OCI-LY7 (cell line): ENCODE measurements at regions of chr5 and their contacts with region 1.

Region 1: GRCh38 chr5:107294211-107294550 is 376.6 kb downstream of the EFNA5 start:
- DNase-seq: peak; percentile 65
- H3K4me3 ChIP-seq: peak overlapping the region; percentile 2
- H3K27ac ChIP-seq: peak overlapping the region; percentile 49
- H3K4me1 ChIP-seq: peaks cover 38% of the 10 kb centered on the region
- CTCF ChIP-seq: no peak

Region 2: DNA sequence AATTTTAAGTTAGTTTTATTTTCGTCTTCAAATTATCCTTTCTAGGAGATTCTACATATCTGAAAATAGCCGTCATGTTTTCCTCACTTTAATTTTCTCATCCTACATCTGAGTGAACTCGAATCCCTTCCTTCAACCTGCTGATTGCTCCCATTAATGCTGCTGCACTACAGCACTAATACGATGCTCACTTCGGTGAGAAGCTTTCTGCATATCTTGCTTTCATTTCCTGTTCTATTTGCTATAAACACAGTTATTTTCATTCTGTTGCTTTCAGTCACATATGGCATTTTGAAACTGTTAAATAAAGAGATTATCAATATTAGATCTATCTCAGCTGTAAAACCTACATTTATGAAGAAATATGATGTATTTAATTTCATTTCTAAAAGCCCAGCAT is 372.6 kb before region 1 on chr5:
- CTCF ChIA-PET with region 1: no interaction called
- POLR2A ChIA-PET with region 1: no interaction called
- intact Hi-C with region 1: no loop called
- DNase-seq: no peak
- H3K4me3 ChIP-seq: no peak overlapping the region
- H3K27ac ChIP-seq: no peak overlapping the region
- H3K4me1 ChIP-seq: no peaks in the 10 kb centered on the region
- CTCF ChIP-seq: no peak

Region 3: GRCh38 chr5:107306597-107306996 is 12.4 kb after region 1 on chr5:
- CTCF ChIA-PET with region 1: no interaction called
- POLR2A ChIA-PET with region 1: interaction called, 30 read pairs
- intact Hi-C with region 1: no loop called
- DNase-seq: peak; percentile 13
- H3K4me3 ChIP-seq: no peak overlapping the region
- H3K27ac ChIP-seq: no peak overlapping the region
- H3K4me1 ChIP-seq: peaks cover 18% of the 10 kb centered on the region
- CTCF ChIP-seq: no peak

Region 4: GRCh38 chr5:107365320-107366109 is 71.3 kb after region 1 on chr5:
- CTCF ChIA-PET with region 1: no interaction called
- POLR2A ChIA-PET with region 1: no interaction called
- intact Hi-C with region 1: no loop called
- DNase-seq: peak; percentile 40
- H3K4me3 ChIP-seq: no peak overlapping the region
- H3K27ac ChIP-seq: no peak overlapping the region
- H3K4me1 ChIP-seq: peaks cover 33% of the 10 kb centered on the region
- CTCF ChIP-seq: no peak